Activated B cell treated with CpG ODN at 0.5 μM for 24 hours (primary cell): ENCODE measurements at regions of chr6 and their contacts with region 1.

Region 1: DNA sequence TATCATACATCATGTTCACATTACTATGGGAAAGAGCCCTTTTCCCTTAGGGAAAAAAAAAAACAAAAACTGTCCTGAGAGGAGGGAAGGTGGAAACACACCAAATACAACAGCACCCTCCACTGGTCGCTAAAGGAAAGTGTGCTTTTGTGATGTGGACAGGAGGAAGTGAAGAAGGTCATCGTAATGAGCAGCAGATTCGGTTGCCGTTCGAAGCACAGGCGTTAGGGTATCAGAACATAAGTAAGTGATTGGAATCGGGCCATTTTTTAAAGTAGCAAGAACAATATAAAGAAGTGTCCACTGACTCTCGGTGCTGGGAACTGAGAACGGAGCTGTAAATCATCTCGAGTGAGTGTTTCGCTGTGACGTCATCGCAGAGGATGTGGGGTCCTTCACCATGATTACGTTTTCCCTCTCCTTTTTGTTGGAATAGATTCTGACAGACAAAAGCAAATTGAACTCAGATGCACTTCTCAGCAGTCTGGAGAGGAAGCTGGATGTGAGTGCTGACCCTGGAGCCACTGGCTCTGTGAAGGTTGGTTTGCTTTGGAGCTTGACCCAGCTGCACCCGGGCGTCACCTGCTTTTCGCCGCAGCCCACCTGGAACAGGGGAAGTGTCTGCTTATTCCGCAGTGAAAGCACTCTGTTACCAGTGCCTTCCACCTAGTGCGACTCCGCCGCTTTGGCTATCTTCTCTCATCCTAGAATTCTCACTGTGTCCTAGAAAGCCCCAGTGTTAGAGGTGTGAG is 203.6 kb upstream of the GMDS start:
- DNase-seq: no peak
- ATAC-seq: no peak
- H3K4me3 Mint-ChIP-seq: peak overlapping the region; percentile 67
- H3K27ac Mint-ChIP-seq: no peak overlapping the region
- H3K4me1 Mint-ChIP-seq: peaks cover 8% of the 10 kb centered on the region
- H3K27me3 Mint-ChIP-seq: no peaks in the 10 kb centered on the region
- CTCF ChIP-seq: no peak

Region 2: DNA sequence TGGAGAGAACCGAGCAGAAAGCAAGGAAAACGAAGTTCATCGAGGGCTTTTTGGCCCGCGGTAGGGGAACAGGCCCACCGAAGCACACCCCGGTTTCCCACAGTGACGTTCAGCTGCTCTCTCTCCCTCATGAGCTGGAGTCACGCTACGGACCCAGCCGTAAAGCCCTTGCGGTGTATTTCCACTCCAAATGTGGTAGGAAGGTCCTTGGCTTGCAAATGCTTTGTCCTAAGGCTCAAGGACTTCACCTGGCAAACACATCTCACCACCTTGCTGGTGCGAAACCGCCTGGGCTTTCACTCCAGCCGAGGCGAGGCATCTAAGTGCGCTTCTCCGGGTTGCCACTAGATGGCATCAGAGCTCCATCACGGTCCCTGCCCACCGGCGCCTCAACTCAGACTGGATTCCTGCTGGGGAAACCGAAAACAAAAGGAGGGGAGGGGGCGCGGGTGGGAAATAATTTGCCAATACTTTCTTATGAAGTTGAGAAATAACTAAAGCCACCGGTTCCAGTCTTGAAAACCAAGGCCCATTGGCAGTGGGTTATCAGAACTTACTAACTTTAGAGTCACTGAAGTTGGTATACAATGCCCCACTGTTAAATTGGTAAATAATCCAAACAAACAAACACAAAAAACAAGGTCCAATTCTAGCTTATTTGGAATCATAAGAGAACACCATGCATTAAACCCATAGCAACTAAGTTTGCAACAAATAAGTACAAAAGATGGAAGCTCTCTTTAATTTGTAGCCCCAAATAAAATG is 852.7 kb before region 1 on chr6:
- CTCF ChIA-PET with region 1: no interaction called
- POLR2A ChIA-PET with region 1: no interaction called
- intact Hi-C with region 1: loop called (anchors 1 kb)
- DNase-seq: peak; percentile 50
- ATAC-seq: peak; percentile 87
- H3K4me3 Mint-ChIP-seq: no peak overlapping the region
- H3K27ac Mint-ChIP-seq: no peak overlapping the region
- H3K4me1 Mint-ChIP-seq: peaks cover 4% of the 10 kb centered on the region
- H3K27me3 Mint-ChIP-seq: peaks cover 49% of the 10 kb centered on the region
- CTCF ChIP-seq: no peak

Region 3: DNA sequence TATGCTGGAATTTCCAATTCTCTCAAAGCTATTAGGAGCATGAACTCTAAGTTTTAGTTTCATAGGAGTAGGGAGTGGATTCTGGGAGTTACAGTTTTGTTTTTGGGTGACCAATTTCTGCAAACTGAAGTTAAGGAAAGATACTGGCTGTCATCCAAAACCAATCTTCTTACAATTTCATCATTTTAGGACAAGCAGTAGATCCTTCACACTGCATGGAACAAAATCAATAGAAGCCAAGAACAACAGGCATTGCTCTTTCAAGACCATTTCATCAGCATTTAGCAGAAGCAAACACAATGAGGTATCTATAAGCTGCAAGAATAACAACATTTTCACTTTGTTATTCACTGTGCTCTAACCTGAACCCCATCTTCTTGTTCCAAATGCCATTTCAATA is 376.5 kb before region 1 on chr6:
- CTCF ChIA-PET with region 1: no interaction called
- POLR2A ChIA-PET with region 1: no interaction called
- intact Hi-C with region 1: no loop called
- DNase-seq: no peak
- ATAC-seq: no peak
- H3K4me3 Mint-ChIP-seq: no peak overlapping the region
- H3K27ac Mint-ChIP-seq: no peak overlapping the region
- H3K4me1 Mint-ChIP-seq: no peaks in the 10 kb centered on the region
- H3K27me3 Mint-ChIP-seq: no peaks in the 10 kb centered on the region
- CTCF ChIP-seq: no peak